Upper lobe of right lung (tissue), 1 donor: ENCODE measurements at regions of chr21 and their contacts with region 1.

Region 1: GRCh38 chr21:27700974-27701614 is 734.2 kb upstream of the ADAMTS5 start:
- DNase-seq: peak; percentile 84
- ATAC-seq: peak; percentile 95
- H3K4me3 ChIP-seq: no peak overlapping the region
- H3K27ac ChIP-seq: no peak overlapping the region
- H3K4me1 ChIP-seq: no peaks in the 10 kb centered on the region
- H3K27me3 ChIP-seq: no peaks in the 10 kb centered on the region
- CTCF ChIP-seq: peak; percentile 83

Region 2: GRCh38 chr21:26850108-26850643 is 850.9 kb before region 1 on chr21:
- intact Hi-C with region 1: loop called (anchors 5 kb)
- DNase-seq: no peak
- ATAC-seq: no peak
- H3K4me3 ChIP-seq: no peak overlapping the region
- H3K27ac ChIP-seq: no peak overlapping the region
- H3K4me1 ChIP-seq: peaks cover 4% of the 10 kb centered on the region
- H3K27me3 ChIP-seq: peaks cover 4% of the 10 kb centered on the region
- CTCF ChIP-seq: peak; percentile 68

Region 3: DNA sequence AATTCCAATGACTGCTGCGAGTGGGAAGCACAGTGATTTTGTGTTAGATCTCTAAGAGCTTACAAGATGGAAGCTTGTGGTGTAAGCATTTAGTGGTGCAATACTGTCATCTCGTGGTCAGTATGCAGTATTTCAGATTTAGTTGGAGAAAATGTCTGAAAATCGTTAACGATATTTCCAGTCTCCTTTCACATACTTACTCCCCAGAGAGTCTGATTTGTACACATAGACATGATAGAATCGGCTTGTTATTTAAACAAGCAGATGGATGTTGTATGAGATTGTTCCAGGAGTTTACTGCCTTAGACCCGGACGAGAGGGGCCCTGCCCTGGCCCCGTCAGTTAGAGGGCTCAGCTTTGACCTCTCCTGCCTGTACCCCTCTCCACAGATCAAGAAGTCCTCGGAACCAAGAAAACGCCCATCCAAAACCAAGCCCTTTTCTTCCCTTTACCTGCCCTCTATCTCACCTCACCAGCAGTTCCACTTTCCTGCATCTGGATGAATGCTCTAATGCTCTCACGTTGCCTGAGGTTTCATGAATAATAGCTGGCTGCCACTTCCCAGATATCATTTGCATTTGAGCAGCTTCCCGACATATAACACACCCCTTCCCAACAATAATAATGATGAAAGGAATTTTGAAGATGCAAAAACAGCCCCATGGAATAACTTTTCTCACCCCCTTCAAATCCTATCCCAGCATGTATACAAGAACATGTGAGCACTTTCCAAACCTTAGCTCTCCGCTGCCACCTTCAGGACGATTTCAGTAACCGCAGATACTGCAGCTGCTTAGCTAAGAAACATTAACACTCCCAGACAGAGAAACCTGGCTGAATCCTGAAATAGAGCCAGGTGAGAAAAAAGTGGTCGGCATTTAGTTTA is 1044.3 kb after region 1 on chr21:
- intact Hi-C with region 1: loop called (anchors 10 kb)
- DNase-seq: no peak
- ATAC-seq: peak; percentile 95
- H3K4me3 ChIP-seq: peak overlapping the region; percentile 46
- H3K27ac ChIP-seq: peak overlapping the region; percentile 63
- H3K4me1 ChIP-seq: peaks cover 3% of the 10 kb centered on the region
- H3K27me3 ChIP-seq: no peaks in the 10 kb centered on the region
- CTCF ChIP-seq: peak; percentile 92